ENCODE measurements at regions of chr9 and their contacts with region 1.

Region 1: GRCh38 chr9:26112724-26113123 is 434.5 kb upstream of the TUSC1 start:
- H3K4me3 Mint-ChIP-seq: no peak overlapping the region
- H3K27ac Mint-ChIP-seq: no peak overlapping the region
- H3K4me1 Mint-ChIP-seq: no peaks in the 10 kb centered on the region
- H3K27me3 Mint-ChIP-seq: no peaks in the 10 kb centered on the region

Region 2: DNA sequence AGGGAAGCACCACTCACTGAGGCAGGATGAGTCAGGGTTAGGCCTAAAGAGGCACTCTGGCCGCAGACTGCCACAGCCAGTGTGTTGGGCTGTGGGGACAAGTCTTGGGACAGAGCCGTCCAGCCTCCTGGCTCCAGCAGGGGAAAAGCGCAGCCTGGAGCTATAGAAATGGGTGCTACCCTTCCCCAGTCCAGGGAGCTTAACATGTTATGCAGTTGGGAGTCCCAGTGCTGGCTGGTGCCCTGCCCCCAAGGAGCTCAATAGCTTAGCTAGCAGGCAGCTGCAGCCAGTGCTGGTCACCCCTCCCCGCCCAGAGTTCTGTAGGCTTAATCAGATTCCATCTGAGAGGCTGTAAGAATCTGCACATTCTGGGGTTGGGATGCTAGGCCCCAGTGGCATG is 34.9 kb before region 1 on chr9:
- intact Hi-C with region 1: loop called (anchors 5 kb)
- H3K4me3 Mint-ChIP-seq: no peak overlapping the region
- H3K27ac Mint-ChIP-seq: no peak overlapping the region
- H3K4me1 Mint-ChIP-seq: no peaks in the 10 kb centered on the region
- H3K27me3 Mint-ChIP-seq: no peaks in the 10 kb centered on the region

Measured in dendritic cell treated with granulocyte-macrophage colony-stimulating factor and Interleukin-4, amounts not matched to agents 40 ng/mL and 50 ng/mL, for 4 days (primary cell).